ENCODE measurements at regions of chr5 and their contacts with region 1.

Region 1: GRCh38 chr5:57173185-57174127 is at the start of gene GPBP1:
- DNase-seq: peak; percentile 99
- H3K4me3 Mint-ChIP-seq: peak within 1 kb of the TSS; percentile 97
- H3K27ac Mint-ChIP-seq: peak within 1 kb of the TSS; percentile 99
- H3K4me1 Mint-ChIP-seq: peaks cover 10% of the 10 kb centered on the region
- H3K27me3 Mint-ChIP-seq: no peaks in the 10 kb centered on the region
- CTCF ChIP-seq: no peak
- total RNA-seq, gene GPBP1: 63.6 and 66.5 TPM in 2 replicates

Region 2: DNA sequence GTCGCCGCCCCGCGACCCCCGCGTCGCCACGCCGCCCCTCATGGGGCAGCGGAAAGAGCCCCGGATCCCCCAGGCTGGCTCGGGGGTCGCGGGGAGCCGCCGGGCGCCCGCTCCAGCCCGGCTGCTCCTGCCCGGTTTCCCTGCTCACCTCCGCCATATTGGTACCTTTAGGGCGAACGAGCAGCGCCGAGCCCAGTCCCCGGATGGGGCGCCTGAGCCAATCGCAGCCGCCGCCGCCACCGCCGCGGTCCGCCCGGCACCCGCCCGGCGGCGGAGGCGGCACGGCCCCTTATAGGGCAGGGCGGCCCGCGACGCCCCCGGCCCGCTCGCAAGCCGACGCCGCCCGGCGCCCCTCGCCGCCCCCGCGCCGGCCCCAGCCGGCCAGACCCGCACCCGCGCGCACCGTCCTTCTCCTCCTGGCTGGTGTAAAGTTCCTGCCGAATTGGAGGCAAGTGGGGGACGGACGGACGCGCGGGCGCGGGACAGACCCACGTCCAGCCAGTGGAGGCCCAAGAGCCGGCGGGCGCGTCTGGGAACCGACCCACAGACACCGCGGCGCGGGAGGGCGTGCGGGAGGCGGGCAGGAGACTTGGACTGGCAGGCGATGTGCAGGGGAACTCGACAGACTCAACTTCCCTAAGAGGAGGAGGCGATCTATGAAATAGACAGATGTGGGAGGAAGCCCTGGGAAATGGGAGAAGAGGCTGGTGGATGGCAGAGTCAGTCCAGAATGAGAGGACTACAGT is 221.3 kb before region 1 on chr5 and contains the start of gene MIER3:
- CTCF ChIA-PET with region 1: no interaction called
- POLR2A ChIA-PET with region 1: interaction called, 13 read pairs
- intact Hi-C with region 1: no loop called
- DNase-seq: peak; percentile 73
- H3K4me3 Mint-ChIP-seq: peak within 1 kb of the TSS; percentile 88
- H3K27ac Mint-ChIP-seq: peak within 1 kb of the TSS; percentile 56
- H3K4me1 Mint-ChIP-seq: peaks cover 14% of the 10 kb centered on the region
- H3K27me3 Mint-ChIP-seq: peaks cover 13% of the 10 kb centered on the region
- CTCF ChIP-seq: no peak
- total RNA-seq, gene MIER3: 17.8 and 25.0 TPM in 2 replicates

Region 3: DNA sequence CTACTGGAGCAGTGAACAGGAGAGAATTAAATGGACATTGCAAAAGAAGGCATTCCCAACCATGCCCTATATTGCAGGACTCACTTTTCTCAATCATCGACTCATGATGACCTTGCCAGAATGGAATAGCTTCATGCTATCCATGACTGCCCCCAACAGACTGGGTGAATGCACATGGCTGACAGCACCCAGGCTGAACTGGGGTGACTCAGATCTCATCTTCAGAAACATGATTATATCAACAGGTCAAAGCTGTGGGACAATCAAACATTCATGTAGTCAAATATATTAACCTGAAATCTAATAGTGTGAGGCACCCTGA is 186.9 kb before region 1 on chr5:
- CTCF ChIA-PET with region 1: no interaction called
- POLR2A ChIA-PET with region 1: no interaction called
- intact Hi-C with region 1: no loop called
- DNase-seq: peak; percentile 21
- H3K4me3 Mint-ChIP-seq: no peak overlapping the region
- H3K27ac Mint-ChIP-seq: no peak overlapping the region
- H3K4me1 Mint-ChIP-seq: no peaks in the 10 kb centered on the region
- H3K27me3 Mint-ChIP-seq: no peaks in the 10 kb centered on the region
- CTCF ChIP-seq: no peak

Region 4: DNA sequence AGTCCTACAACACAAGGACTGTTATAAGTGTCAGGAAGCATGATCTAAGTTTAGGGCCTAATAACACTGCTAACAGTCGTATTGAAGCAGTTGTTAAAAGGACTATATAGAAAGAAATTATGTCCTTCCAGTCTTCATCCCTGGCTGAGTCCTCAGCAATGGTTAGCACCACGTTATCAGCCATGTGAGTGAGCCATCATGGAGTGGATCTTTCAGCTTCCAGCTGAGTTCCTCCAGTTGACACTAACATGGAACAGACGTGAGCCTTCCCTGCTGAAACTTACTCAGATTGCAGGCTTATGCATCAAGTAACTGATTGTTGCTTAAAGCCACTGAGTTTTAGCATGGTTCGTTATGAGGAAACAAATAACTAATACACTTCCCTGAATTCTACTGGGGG is 21.1 kb before region 1 on chr5:
- CTCF ChIA-PET with region 1: no interaction called
- POLR2A ChIA-PET with region 1: no interaction called
- intact Hi-C with region 1: no loop called
- DNase-seq: no peak
- H3K4me3 Mint-ChIP-seq: no peak overlapping the region
- H3K27ac Mint-ChIP-seq: no peak overlapping the region
- H3K4me1 Mint-ChIP-seq: no peaks in the 10 kb centered on the region
- H3K27me3 Mint-ChIP-seq: no peaks in the 10 kb centered on the region
- CTCF ChIP-seq: no peak

Region 5: DNA sequence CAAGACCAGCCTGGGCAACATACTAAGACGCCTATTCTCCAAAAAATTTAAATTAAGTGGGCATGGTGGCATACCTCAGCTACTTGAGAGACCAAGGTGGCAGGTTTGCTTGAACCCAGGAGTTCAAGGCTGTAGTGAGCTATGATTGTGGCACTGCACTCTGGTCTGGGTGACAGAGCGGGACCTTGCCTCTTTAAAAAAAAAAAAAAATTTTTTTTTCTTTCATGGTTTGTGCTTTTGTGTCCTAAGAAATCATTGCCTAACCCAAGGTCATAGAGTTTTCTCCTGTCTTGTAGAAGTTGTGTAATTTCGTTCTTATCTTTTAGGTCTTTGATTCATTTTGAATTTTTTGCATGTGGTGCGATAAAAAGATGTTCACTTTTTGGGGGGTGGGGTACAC is 12.7 kb after region 1 on chr5:
- CTCF ChIA-PET with region 1: interaction called, 3 read pairs
- POLR2A ChIA-PET with region 1: interaction called, 18 read pairs
- intact Hi-C with region 1: no loop called
- DNase-seq: no peak
- H3K4me3 Mint-ChIP-seq: peak overlapping the region; percentile 1
- H3K27ac Mint-ChIP-seq: peak overlapping the region; percentile 16
- H3K4me1 Mint-ChIP-seq: peaks cover 31% of the 10 kb centered on the region
- H3K27me3 Mint-ChIP-seq: no peaks in the 10 kb centered on the region
- CTCF ChIP-seq: no peak

Measured in MCF 10A (cell line).